ENCODE measurements at regions of chr7 and their contacts with region 1.

Region 1: DNA sequence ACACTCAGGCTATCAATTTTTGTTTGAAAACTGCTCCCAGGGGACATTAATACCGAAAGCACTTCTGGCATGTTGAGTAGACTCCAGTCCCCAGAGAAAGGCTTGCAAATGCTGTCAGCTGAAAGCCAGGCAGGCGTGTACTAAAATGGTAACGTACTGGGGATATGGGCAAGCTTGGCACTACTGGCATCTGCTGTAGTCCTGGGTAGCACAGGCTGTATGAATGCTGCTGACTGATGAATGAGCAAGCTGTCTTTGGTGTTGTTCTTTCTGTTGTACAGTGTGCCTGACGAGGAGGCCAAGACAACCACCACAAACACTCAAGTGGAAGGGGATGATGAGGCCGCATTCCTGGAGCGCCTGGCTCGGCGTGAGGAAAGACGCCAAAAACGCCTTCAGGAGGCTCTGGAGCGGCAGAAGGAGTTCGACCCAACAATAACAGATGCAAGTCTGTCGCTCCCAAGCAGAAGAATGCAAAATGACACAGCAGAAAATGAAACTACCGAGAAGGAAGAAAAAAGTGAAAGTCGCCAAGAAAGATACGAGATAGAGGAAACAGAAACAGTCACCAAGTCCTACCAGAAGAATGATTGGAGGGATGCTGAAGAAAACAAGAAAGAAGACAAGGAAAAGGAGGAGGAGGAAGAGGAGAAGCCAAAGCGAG is 53.5 kb upstream of the AGBL3 start:
- DNase-seq: no peak
- H3K4me3 ChIP-seq: no peak overlapping the region
- H3K27me3 ChIP-seq: no peaks in the 10 kb centered on the region
- CTCF ChIP-seq: no peak

Region 2: DNA sequence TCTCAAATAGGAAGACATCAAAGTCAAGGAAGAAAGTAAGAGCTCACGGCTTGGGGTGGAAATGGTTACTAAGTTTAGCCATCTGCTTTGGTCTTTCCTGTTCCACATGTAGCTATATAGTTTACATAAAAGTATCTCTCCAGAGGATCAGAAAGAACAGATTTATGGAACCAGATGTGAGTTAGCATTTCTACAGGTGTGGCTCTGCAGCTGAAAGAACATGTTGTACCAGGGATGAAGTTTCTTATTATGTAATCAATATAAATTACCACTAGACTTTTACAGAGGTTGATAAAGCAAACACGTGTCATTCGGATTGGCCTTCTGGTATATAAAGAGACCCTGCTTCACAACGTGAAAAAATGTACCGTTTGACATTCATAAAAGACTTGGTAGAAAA is 133.5 kb before region 1 on chr7:
- CTCF ChIA-PET with region 1: no interaction called
- POLR2A ChIA-PET with region 1: no interaction called
- DNase-seq: no peak
- H3K4me3 ChIP-seq: no peak overlapping the region
- H3K27me3 ChIP-seq: no peaks in the 10 kb centered on the region
- CTCF ChIP-seq: no peak

Region 3: DNA sequence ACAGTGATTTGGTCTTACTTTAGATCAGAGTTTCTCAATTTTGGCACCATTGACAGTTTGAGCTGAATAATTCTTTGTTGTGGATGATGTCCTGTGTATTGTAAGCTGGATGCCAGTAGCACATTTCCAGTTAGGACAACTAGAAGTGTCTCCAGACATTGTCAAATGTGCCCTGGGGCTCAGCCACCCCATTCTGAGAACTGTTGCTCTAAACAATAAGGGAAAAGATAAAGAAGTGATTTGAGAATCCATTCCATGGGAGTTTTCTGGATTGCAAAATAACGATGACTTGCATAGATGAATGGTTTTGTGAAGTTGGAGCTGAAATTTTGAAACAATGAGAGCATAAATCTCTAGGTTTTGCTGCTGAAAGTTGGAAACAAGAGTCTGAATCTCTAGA is 669.5 kb after region 1 on chr7:
- CTCF ChIA-PET with region 1: no interaction called
- POLR2A ChIA-PET with region 1: interaction called, 14 read pairs
- DNase-seq: no peak
- H3K4me3 ChIP-seq: no peak overlapping the region
- H3K27me3 ChIP-seq: no peaks in the 10 kb centered on the region
- CTCF ChIP-seq: no peak